Activated CD8-positive, alpha-beta T cell treated with anti-CD3 and anti-CD28 coated beads for 36 hours (primary cell): ENCODE measurements at regions of chr2 and their contacts with region 1.

Region 1: GRCh38 chr2:233404222-233404621 is 49.9 kb downstream of the DGKD start:
- DNase-seq: peak; percentile 77
- ATAC-seq: peak; percentile 38
- H3K4me3 Mint-ChIP-seq: no peak overlapping the region
- H3K27ac Mint-ChIP-seq: peak overlapping the region; percentile 49
- H3K4me1 Mint-ChIP-seq: peaks cover 60% of the 10 kb centered on the region
- H3K27me3 Mint-ChIP-seq: no peaks in the 10 kb centered on the region
- CTCF ChIP-seq: peak; percentile 81

Region 2: DNA sequence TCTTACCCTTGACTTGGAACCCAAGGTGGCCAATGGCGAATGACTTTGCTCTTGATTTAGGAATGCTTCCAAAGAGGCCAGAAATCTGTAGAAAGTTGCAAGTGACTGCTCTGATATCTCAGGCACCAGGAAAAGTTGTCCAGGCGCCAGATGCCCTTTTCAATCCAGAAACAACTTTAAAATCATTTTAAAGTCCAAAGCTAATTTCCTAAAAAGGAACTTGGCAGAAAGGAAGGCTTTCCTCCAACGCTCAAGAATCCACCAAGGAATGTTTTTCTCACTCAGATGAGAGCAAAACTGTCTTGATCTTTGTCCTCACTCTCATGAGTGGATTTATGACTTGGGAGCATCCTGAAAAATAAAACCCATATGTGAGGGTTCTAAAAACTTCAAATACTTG is 396.5 kb before region 1 on chr2:
- CTCF ChIA-PET with region 1: no interaction called
- POLR2A ChIA-PET with region 1: no interaction called
- intact Hi-C with region 1: no loop called
- DNase-seq: no peak
- ATAC-seq: no peak
- H3K4me3 Mint-ChIP-seq: no peak overlapping the region
- H3K27ac Mint-ChIP-seq: no peak overlapping the region
- H3K4me1 Mint-ChIP-seq: no peaks in the 10 kb centered on the region
- H3K27me3 Mint-ChIP-seq: no peaks in the 10 kb centered on the region
- CTCF ChIP-seq: no peak

Region 3: DNA sequence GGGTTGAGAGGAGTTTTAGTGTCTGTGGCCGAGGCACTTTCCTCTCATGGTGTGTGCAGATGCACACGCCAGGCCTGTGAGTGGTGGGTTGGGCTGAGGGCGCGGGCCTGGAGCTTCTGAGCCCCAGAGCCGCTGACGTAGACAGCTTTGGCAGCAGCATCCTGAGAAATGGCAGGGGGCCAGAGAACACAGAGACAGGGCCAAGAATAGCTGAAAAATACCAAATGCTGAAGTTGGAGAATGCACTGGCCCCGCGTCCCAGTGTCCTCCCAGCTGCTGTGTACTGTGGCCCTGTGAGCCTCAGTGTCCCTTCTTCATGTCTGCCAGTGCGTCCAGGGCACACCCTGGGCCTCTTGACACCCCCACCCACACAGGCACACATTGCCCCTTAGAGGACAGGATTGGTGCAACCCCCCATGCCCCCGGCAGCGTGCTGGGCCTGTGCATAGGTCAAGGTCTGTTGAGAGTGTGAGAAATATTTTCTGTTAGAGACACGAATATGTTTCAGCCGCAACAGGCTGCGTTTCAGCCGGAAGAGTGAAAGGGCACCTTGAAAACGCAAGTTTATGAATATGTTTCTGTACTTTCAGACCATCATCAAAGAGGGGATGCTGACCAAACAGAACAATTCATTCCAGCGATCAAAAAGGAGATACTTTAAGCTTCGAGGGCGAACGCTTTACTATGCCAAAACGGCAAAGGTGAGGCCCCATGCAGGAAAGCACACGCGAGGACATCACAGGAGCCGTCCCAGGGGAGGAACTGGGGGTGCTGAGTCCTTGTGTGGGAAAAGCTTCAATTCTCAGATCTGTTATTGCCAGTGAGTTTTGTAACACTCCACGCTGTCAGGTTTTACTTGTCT is 16.3 kb before region 1 on chr2:
- CTCF ChIA-PET with region 1: interaction called, 16 read pairs
- POLR2A ChIA-PET with region 1: interaction called, 5 read pairs
- intact Hi-C with region 1: no loop called
- DNase-seq: no peak
- ATAC-seq: no peak
- H3K4me3 Mint-ChIP-seq: peak overlapping the region; percentile 69
- H3K27ac Mint-ChIP-seq: peak overlapping the region; percentile 89
- H3K4me1 Mint-ChIP-seq: peaks cover 70% of the 10 kb centered on the region
- H3K27me3 Mint-ChIP-seq: no peaks in the 10 kb centered on the region
- CTCF ChIP-seq: no peak

Region 4: DNA sequence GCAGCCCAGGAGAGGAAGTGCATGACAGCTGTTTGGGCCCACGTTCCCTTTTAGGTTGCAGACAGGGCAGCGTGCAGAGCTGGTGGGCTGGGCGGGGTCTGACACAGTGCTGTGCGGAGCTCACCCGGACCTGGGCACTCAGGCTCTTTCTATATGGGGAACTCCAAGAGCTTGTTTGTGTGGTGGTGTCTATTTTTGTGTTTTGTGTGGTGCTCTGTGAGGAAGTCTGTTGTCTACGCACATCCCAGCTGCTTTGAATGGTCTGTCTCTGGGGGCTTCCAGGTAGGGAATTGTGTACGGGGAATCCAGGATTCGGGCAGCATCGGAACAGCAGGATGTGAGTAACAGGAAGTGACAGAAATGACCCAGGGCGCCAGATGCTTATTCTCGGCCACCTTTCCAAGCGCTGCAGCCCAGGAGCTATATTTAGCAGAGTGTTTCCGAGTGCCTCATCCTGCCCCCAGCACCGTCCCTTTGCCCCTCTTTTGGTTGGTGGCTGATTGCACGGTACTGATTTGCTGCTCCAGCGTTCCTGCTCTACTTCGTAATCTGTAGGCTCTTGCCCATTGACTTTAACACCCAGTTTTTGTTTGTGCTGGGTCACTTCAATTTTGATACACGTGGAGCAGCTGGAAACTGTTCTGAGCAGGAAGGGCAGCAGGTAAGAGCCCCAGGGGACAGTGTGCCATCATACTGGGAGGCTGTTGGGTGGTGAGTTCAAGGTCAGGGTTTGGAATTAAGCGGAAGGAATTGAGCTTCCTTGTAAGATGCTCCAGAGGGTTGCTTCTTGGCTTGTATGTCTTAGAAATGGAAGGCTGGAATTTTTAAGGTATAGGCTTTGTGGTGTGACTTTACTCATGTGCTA is 14.8 kb after region 1 on chr2:
- CTCF ChIA-PET with region 1: interaction called, 183 read pairs
- POLR2A ChIA-PET with region 1: interaction called, 5 read pairs
- intact Hi-C with region 1: no loop called
- DNase-seq: peak; percentile 85
- ATAC-seq: peak; percentile 68
- H3K4me3 Mint-ChIP-seq: peak overlapping the region; percentile 71
- H3K27ac Mint-ChIP-seq: peak overlapping the region; percentile 88
- H3K4me1 Mint-ChIP-seq: peaks cover 93% of the 10 kb centered on the region
- H3K27me3 Mint-ChIP-seq: no peaks in the 10 kb centered on the region
- CTCF ChIP-seq: no peak

Region 5: DNA sequence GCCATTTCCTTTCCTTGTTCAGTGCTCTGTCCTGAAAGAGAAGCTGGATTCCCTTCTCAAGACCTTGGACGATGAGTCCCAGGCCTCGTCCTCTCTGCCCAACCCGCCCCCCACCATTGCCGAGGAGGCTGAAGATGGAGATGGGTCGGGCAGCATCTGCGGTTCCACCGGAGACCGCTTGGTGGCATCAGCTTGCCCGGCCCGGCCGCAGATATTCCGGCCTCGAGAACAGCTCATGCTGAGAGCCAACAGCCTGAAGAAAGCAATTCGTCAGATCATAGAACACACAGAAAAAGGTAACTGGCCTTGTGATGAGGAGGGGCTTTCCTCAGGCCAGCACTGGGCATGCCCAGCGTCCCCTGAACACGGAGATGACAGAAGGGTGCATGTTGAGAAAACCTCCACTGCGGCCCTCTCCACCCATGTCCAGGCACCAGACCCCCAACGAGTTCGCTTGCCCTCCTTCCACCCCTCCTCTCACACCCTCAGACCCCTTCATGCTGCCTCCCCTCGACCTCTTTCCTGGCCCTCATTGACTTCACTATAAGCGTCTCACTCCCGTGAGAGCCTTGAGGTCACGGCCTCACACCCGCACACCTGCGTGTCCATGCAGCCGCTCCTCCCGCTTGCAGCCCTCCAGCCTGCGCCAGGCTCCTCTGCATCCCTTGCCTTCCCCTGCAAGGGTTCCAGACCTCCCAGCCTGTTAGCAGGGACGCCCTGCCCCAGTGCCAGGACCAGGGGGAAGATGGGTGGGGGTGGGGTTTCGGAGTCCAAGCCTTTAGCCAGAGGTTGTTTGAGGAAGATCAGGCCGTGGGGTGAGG is 45.1 kb after region 1 on chr2:
- CTCF ChIA-PET with region 1: interaction called, 213 read pairs
- POLR2A ChIA-PET with region 1: no interaction called
- intact Hi-C with region 1: no loop called
- DNase-seq: no peak
- ATAC-seq: no peak
- H3K4me3 Mint-ChIP-seq: no peak overlapping the region
- H3K27ac Mint-ChIP-seq: no peak overlapping the region
- H3K4me1 Mint-ChIP-seq: no peaks in the 10 kb centered on the region
- H3K27me3 Mint-ChIP-seq: no peaks in the 10 kb centered on the region
- CTCF ChIP-seq: no peak